Activated CD4-positive, alpha-beta T cell treated with anti-CD3 and anti-CD28 coated beads for 36 hours (primary cell): ENCODE measurements at regions of chr9 and their contacts with region 1.

Region 1: DNA sequence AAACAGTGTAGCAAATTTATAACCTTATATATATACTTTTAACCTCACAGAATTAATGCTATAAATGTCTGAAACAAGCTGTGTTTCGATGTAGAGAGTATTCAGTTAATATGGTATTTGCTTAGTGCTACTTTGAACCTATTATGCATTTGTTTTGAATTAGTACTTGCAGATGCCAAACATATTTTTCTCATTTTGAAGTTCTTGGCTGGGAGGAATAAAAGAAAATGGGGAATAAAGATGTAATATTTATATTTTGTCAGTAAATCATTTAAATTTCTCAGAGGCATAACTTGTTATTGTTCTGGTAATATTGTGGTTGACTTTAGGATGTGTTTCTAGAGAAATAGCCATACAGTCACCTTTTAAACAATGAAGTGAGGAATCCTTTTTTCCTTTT is 175.9 kb upstream of the IZUMO3 start:
- DNase-seq: no peak
- ATAC-seq: no peak
- H3K4me3 Mint-ChIP-seq: no peak overlapping the region
- H3K27ac Mint-ChIP-seq: no peak overlapping the region
- H3K4me1 Mint-ChIP-seq: no peaks in the 10 kb centered on the region
- H3K27me3 Mint-ChIP-seq: no peaks in the 10 kb centered on the region

Region 2: GRCh38 chr9:24776226-24776625 is 54.6 kb after region 1 on chr9:
- CTCF ChIA-PET with region 1: no interaction called
- POLR2A ChIA-PET with region 1: no interaction called
- intact Hi-C with region 1: loop called in 1 of 2 experiments (anchors 10 kb)
- DNase-seq: no peak
- ATAC-seq: no peak
- H3K4me3 Mint-ChIP-seq: no peak overlapping the region
- H3K27ac Mint-ChIP-seq: no peak overlapping the region
- H3K4me1 Mint-ChIP-seq: no peaks in the 10 kb centered on the region
- H3K27me3 Mint-ChIP-seq: no peaks in the 10 kb centered on the region

Region 3: GRCh38 chr9:25025156-25025555 is 303.5 kb after region 1 on chr9:
- CTCF ChIA-PET with region 1: no interaction called
- POLR2A ChIA-PET with region 1: no interaction called
- intact Hi-C with region 1: no loop called
- DNase-seq: no peak
- ATAC-seq: no peak
- H3K4me3 Mint-ChIP-seq: no peak overlapping the region
- H3K27ac Mint-ChIP-seq: no peak overlapping the region
- H3K4me1 Mint-ChIP-seq: no peaks in the 10 kb centered on the region
- H3K27me3 Mint-ChIP-seq: no peaks in the 10 kb centered on the region

Region 4: GRCh38 chr9:25322143-25322542 is 600.5 kb after region 1 on chr9:
- CTCF ChIA-PET with region 1: no interaction called
- POLR2A ChIA-PET with region 1: no interaction called
- intact Hi-C with region 1: no loop called
- DNase-seq: no peak
- ATAC-seq: no peak
- H3K4me3 Mint-ChIP-seq: no peak overlapping the region
- H3K27ac Mint-ChIP-seq: no peak overlapping the region
- H3K4me1 Mint-ChIP-seq: no peaks in the 10 kb centered on the region
- H3K27me3 Mint-ChIP-seq: no peaks in the 10 kb centered on the region